MCF 10A (cell line): ENCODE measurements at regions of chrX and their contacts with region 1.

Region 1: DNA sequence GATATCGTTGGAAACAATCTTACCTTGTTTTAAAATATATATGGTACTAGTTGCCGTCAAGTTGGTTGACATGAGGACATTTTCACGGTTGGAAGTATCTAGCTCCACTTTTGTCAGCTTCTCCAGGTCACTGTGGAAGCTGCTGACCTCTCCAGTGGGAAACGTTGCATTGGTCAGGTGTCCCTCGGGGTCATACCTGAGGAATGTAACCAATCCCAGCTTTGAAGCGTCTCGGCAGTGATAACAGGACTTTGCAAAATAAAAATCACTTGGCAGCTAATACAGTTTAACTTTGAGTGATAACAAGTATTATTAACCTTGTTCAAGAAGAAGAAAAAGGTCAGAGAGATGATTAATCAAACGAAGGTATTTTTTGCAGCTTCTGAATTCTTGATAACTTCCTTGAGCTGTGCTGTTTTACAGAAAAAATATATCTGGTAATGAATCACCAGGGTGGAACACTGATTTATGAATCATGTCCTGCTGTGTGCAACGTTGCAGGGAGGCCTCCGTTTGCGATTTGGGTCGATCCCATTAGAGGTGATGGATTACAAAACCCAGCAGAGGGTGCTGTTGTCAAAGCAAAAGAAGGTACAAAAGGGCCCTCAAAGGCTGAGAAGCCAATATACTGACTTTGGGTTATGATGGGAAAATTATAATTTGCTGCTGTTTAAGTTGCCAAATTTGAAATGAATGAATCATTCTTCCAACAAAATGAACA is 60.1 kb downstream of the SH2D1A start:
- DNase-seq: peak; percentile 87
- H3K4me3 Mint-ChIP-seq: no peak overlapping the region
- H3K27ac Mint-ChIP-seq: no peak overlapping the region
- H3K4me1 Mint-ChIP-seq: no peaks in the 10 kb centered on the region
- H3K27me3 Mint-ChIP-seq: no peaks in the 10 kb centered on the region
- CTCF ChIP-seq: peak; percentile 63

Region 2: GRCh38 chrX:124098089-124098488 is 308.4 kb before region 1 on chrX:
- CTCF ChIA-PET with region 1: no interaction called
- POLR2A ChIA-PET with region 1: no interaction called
- intact Hi-C with region 1: loop called (anchors 5 kb)
- DNase-seq: peak; percentile 16
- H3K4me3 Mint-ChIP-seq: no peak overlapping the region
- H3K27ac Mint-ChIP-seq: no peak overlapping the region
- H3K4me1 Mint-ChIP-seq: no peaks in the 10 kb centered on the region
- H3K27me3 Mint-ChIP-seq: no peaks in the 10 kb centered on the region
- CTCF ChIP-seq: peak; percentile 54

Region 3: DNA sequence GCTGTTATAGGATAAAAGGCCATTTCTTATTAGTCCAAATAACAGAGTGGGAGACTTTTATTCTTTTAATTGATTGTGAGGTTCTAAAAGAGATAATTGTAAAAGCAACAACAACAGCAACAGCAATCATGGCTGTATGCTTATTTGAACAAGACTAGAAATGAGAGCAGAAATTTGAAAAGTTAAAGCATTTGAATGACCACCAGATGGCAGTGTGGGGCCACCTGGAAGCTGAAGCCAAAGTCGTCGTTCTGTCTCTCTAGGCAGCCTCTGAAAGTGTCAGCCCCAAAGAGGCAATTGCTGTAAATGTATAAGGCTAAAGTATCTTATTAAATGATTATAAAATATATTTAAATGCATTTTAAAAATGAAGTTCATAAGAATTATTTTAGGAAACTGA is 17.9 kb before region 1 on chrX:
- CTCF ChIA-PET with region 1: interaction called, 17 read pairs
- POLR2A ChIA-PET with region 1: no interaction called
- intact Hi-C with region 1: no loop called
- DNase-seq: peak; percentile 61
- H3K4me3 Mint-ChIP-seq: no peak overlapping the region
- H3K27ac Mint-ChIP-seq: no peak overlapping the region
- H3K4me1 Mint-ChIP-seq: no peaks in the 10 kb centered on the region
- H3K27me3 Mint-ChIP-seq: peaks cover 14% of the 10 kb centered on the region
- CTCF ChIP-seq: peak; percentile 74

Region 4: DNA sequence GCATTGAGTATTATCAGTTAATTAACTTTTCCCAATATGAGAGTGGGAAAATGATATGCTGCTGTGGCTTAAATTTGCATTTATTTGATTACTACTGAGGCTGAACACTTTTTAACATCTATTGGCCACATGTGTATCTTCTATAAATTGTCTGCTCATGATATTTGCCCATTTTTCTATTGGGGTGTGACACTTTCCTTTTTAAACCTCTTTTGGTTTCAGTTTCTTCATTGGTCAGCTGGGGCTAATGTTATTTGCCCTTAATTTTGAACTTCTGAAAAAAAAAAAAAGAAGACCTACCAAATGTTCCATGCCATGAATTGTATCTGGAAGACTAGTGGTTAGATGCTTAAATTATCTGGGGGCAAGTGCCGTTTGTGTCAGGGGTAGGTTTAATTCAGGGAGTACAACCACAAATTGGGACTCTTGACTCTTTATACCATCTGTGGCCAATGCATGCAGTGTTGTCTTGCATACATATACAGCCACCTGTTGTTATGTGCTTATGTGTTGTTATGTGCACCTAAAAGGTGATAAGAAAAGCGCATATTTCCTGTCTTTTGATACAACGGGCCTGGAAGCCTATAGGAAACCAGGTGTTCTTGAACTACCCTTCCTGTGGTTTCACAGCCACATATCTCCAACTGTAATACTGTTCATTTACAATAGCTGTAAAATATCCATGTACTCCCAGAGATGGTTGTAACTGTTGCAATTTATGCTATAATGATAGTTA is 11.1 kb before region 1 on chrX:
- CTCF ChIA-PET with region 1: interaction called, 17 read pairs
- POLR2A ChIA-PET with region 1: interaction called, 3 read pairs
- intact Hi-C with region 1: no loop called
- DNase-seq: no peak
- H3K4me3 Mint-ChIP-seq: no peak overlapping the region
- H3K27ac Mint-ChIP-seq: no peak overlapping the region
- H3K4me1 Mint-ChIP-seq: no peaks in the 10 kb centered on the region
- H3K27me3 Mint-ChIP-seq: no peaks in the 10 kb centered on the region
- CTCF ChIP-seq: no peak

Region 5: DNA sequence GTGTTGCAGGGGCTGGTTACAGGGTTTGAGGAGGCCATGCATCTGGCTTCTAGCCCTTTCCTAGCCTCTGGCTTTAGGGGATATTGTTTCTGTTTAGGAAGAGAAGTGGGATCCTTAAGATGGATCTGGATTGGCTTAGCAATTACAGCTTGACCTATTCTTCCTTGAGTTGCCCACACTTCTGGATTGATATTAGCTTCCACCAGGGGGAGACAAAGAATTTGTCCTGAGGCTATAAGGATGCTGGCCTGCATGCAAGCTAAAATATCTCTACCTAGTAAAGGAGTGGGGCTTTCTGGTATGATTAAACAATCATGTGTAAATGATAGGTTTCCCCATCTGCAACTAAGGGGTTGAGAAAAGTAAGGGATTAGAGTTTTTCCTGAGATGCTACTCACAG is 1030.4 kb after region 1 on chrX:
- CTCF ChIA-PET with region 1: no interaction called
- POLR2A ChIA-PET with region 1: no interaction called
- intact Hi-C with region 1: loop called (anchors 2 kb)
- DNase-seq: peak; percentile 49
- H3K4me3 Mint-ChIP-seq: no peak overlapping the region
- H3K27ac Mint-ChIP-seq: no peak overlapping the region
- H3K4me1 Mint-ChIP-seq: no peaks in the 10 kb centered on the region
- H3K27me3 Mint-ChIP-seq: no peaks in the 10 kb centered on the region
- CTCF ChIP-seq: peak; percentile 42

Region 6: DNA sequence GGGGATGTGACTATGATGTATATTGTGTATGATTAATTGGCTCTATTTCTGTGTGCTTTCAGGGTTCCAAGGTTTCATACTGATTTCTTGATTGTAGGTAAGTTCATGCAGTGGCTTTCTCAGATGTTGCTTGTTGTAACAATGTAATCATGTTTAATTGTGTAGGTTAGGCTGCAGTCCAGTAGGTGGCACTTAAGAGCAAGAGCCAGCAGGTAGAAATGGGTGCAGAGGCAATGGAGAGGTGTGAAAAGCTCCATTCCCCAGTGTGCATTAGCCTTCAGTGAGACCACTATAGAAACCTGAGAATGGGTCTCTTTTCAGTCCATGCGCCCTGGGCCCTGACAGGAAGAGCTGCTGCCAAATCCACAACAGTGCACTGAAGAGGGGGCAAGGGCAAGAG is 1731.4 kb after region 1 on chrX:
- CTCF ChIA-PET with region 1: no interaction called
- POLR2A ChIA-PET with region 1: no interaction called
- intact Hi-C with region 1: loop called (anchors 2 kb)
- DNase-seq: peak; percentile 24
- H3K4me3 Mint-ChIP-seq: no peak overlapping the region
- H3K27ac Mint-ChIP-seq: no peak overlapping the region
- H3K4me1 Mint-ChIP-seq: no peaks in the 10 kb centered on the region
- H3K27me3 Mint-ChIP-seq: no peaks in the 10 kb centered on the region
- CTCF ChIP-seq: peak; percentile 26